ENCODE measurements at regions of chr9 and their contacts with region 1.

Region 1: DNA sequence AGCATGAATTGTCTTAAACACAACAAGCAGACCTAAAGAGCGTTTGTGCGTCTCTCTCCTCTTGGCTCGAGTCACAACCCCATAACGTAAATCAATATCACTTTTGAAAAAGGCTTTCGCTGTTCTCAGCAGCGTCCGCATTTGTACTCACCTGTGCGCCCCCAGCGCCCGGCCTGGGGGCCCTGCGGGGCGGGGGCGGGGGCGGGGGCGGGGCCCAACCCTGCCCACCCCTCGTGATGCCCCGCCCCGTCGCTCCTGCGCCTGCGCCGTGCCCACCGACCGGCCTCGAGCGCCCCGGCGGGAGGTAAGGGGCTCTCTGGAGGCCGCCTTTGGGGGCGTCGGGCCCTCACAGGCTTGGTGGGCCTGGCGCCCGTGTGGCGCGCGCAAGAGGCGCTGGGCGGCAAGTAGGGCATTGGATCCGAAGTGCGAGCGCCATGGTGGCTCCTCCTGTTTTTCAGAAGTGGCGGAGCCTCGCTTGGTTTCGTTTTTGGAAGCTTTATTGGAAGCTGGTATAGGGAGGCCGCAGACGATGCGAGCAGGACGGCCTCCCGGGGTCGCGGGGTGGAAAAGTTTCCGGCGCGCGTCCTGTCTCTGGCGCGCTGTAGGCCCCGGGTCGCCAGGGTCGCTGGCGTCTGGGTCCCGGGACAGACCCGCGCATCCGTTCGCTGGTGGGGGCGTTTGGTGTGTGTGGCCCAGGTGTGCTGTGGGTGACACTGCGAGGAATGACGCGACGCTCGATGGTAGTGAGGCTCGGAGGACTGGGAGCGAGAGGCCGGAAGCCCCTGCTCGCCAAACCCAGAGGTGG is at the start of gene STX17:
- H3K4me3 Mint-ChIP-seq: peak within 1 kb of the TSS; percentile 95
- H3K27ac Mint-ChIP-seq: peak within 1 kb of the TSS; percentile 97
- H3K4me1 Mint-ChIP-seq: peaks cover 24% of the 10 kb centered on the region
- H3K27me3 Mint-ChIP-seq: peaks cover 10% of the 10 kb centered on the region

Region 2: DNA sequence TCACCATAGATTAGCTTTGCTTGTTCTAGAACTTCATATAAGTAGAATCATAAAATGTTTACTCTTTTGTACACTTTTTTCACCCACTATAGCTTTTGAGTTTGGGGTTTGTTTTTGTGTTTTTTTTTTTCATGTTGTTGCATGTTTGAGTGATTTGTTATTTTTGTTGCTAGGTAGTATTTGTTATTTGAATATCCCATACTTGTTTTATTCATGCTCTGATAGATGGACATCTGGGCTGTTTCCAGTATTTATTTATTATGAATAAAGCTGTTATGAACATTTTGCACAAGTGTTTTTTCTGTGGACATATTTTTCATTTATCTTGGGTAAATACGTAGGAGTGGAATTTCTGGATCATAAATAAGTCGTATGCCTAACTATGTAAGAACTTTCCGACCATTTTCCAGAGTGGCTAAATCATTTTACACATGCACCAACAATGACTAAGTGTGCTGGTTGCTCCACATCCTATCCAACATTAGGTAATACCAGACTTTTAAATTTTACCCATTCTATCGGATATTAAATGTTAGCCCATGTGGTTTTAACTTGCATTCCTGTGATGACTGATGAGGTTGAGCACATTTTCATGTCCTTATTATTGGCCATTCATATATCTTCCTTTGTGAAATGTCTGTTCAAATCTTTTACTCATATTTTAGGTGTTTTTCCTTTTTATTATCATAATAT is 154.0 kb before region 1 on chr9:
- intact Hi-C with region 1: no loop called
- H3K4me3 Mint-ChIP-seq: no peak overlapping the region
- H3K27ac Mint-ChIP-seq: no peak overlapping the region
- H3K4me1 Mint-ChIP-seq: peaks cover 11% of the 10 kb centered on the region
- H3K27me3 Mint-ChIP-seq: no peaks in the 10 kb centered on the region

Region 3: GRCh38 chr9:99773468-99774138 is 133.0 kb before region 1 on chr9:
- intact Hi-C with region 1: no loop called
- H3K4me3 Mint-ChIP-seq: no peak overlapping the region
- H3K27ac Mint-ChIP-seq: no peak overlapping the region
- H3K4me1 Mint-ChIP-seq: no peaks in the 10 kb centered on the region
- H3K27me3 Mint-ChIP-seq: peaks cover 2% of the 10 kb centered on the region

Region 4: GRCh38 chr9:99828417-99829176 is 78.0 kb before region 1 on chr9:
- intact Hi-C with region 1: loop called (anchors 2 kb)
- H3K4me3 Mint-ChIP-seq: peak overlapping the region; percentile 23
- H3K27ac Mint-ChIP-seq: no peak overlapping the region
- H3K4me1 Mint-ChIP-seq: peaks cover 28% of the 10 kb centered on the region
- H3K27me3 Mint-ChIP-seq: peaks cover 79% of the 10 kb centered on the region